ENCODE measurements at regions of chr21 and their contacts with region 1.

Region 1: GRCh38 chr21:34745557-34746255 is 76.9 kb downstream of the CLIC6 start:
- DNase-seq: peak; percentile 63 to 82 (median 71)
- ATAC-seq: peak; percentile 81 to 93 (median 90)
- H3K4me3 ChIP-seq: peak overlapping the region in 9 of 12 donors; percentile 0 to 55 (median 40)
- H3K27ac ChIP-seq: peak overlapping the region in 2 of 12 donors; percentile 43 to 46
- H3K4me1 ChIP-seq: peaks cover 0 to 14% (median 2%) of the 10 kb centered on the region in 12 donors
- H3K27me3 ChIP-seq: peaks cover 0 to 13% (median 0%) of the 10 kb centered on the region in 9 donors
- CTCF ChIP-seq: peak; percentile 62 to 90 (median 83)
- POLR2A ChIP-seq: no peak

Region 2: DNA sequence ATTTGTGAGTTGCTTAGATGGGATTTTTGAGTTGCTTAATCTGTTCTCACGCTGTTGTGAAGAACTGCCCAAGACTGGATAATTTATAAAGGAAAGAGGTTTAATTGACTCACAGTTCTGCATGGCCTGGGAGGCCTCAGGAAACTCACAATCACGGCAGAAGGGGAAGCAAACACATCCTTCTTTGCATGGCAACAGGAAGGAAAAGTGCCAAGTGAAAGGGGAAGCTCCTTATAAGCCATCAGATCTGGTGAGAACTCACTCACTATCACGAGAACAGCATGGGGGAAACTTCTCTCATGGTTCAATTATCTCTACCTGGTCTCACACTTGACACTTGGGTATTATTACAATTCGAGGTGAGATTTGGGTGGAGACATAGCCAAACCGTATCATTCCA is 66.7 kb before region 1 on chr21:
- intact Hi-C with region 1: no loop called
- DNase-seq: no peak
- ATAC-seq: no peak
- H3K4me3 ChIP-seq: no peak overlapping the region
- H3K27ac ChIP-seq: no peak overlapping the region
- H3K4me1 ChIP-seq: no peaks in the 10 kb centered on the region
- H3K27me3 ChIP-seq: peaks cover 0 to 24% (median 7%) of the 10 kb centered on the region in 9 donors
- CTCF ChIP-seq: no peak
- POLR2A ChIP-seq: no peak

Region 3: DNA sequence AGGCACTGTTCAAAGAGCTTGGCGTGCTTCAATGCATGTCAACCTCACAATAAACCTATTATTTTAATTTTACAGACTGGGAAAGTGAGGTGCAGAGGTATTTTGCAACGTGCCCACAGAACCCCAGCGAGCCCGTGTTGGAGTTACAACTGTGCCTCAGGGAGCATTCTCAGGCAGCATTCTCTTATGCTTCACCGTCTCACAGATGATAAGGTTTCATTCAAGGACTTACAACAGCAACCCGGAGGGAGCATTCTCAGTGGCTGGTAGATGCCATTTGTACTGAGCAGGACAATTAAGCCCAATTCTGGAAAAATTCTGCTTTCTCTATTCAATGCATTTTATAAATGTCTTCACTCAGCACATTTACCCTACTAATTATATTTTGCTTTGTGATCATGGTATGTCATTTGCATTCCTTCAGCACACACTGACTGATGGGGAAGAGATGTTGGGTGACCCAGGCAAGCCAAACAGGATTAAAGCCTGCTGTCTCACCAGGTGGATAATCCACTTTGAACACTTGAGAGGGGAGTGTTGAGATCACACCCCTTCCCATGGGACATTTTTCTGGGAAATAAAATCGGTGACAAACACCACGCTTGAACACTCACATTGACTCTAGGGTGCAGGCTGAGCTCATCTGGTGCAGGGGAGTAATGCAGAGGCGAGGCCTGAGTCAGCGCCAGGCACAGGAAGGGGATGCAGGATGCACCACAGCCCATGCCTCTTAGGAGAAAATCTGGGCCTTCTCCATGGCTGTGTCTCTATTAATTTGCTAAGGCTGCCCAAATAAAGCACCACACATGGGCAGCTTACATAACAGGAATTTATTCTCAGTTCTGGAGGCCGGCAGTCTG is 37.0 kb after region 1 on chr21:
- intact Hi-C with region 1: no loop called
- DNase-seq: no peak
- ATAC-seq: no peak
- H3K4me3 ChIP-seq: no peak overlapping the region
- H3K27ac ChIP-seq: no peak overlapping the region
- H3K4me1 ChIP-seq: no peaks in the 10 kb centered on the region
- H3K27me3 ChIP-seq: peaks cover 0 to 8% (median 0%) of the 10 kb centered on the region in 9 donors
- CTCF ChIP-seq: no peak
- POLR2A ChIP-seq: no peak

Region 4: DNA sequence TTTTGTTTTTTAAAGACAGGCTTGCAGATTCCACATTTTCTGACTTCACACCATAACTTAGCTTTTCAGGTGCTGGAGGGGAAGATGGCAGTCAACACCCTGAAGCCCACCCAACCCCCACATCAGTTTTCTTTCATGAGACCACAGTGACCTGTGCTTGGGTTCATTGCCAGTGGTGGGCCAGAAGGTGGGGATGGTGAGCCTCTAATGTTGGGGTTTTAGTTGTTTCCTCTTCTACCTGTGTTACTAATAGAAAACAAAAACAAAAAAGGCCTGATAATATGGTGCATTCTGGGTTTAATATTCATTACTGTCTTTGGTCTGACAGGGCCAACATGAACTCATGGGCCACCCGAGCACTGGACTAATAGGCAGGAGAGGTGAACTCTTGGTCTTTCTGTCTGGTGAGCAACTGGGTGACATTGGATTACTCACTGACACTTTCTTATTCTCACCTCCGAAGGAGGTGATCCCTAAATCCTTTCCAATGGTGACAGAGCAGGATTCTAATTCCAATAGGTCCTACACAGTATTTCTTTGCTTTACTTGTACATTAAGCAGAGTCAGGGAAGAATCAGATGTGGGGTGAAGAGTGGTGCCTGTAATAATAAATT is 55.9 kb after region 1 on chr21:
- intact Hi-C with region 1: no loop called
- DNase-seq: no peak
- ATAC-seq: no peak
- H3K4me3 ChIP-seq: no peak overlapping the region
- H3K27ac ChIP-seq: no peak overlapping the region
- H3K4me1 ChIP-seq: peaks cover 0 to 47% (median 0%) of the 10 kb centered on the region in 12 donors
- H3K27me3 ChIP-seq: no peaks in the 10 kb centered on the region
- CTCF ChIP-seq: peak in 5 of 12 donors; percentile 14 to 24 (median 21)
- POLR2A ChIP-seq: no peak

Region 5: GRCh38 chr21:35051287-35051818 is 305.6 kb after region 1 on chr21:
- intact Hi-C with region 1: loop called in 1 of 10 experiments (anchors 10 kb)
- DNase-seq: peak; percentile 82 to 91 (median 86)
- ATAC-seq: peak; percentile 86 to 94 (median 91)
- H3K4me3 ChIP-seq: no peak overlapping the region
- H3K27ac ChIP-seq: peak overlapping the region in 7 of 12 donors; percentile 13 to 76 (median 37)
- H3K4me1 ChIP-seq: peaks cover 0 to 47% (median 12%) of the 10 kb centered on the region in 12 donors
- H3K27me3 ChIP-seq: peaks cover 0 to under 1% (median 0%) of the 10 kb centered on the region in 9 donors
- CTCF ChIP-seq: peak in 11 of 12 donors; percentile 43 to 71 (median 60)
- POLR2A ChIP-seq: no peak

Region 6: GRCh38 chr21:35400233-35400957 is 654.7 kb after region 1 on chr21:
- intact Hi-C with region 1: loop called in 9 of 10 experiments (anchors 1 to 10 kb)
- DNase-seq: peak in 1 of 5 donors; percentile 22
- ATAC-seq: peak in 3 of 4 donors; percentile 63 to 73 (median 67)
- H3K4me3 ChIP-seq: peak overlapping the region in 1 of 12 donors; percentile 19
- H3K27ac ChIP-seq: peak overlapping the region in 2 of 12 donors; percentile 8 to 42
- H3K4me1 ChIP-seq: peaks cover 0 to 27% (median 0%) of the 10 kb centered on the region in 12 donors
- H3K27me3 ChIP-seq: peaks cover 0 to 20% (median 0%) of the 10 kb centered on the region in 9 donors
- CTCF ChIP-seq: peak in 11 of 12 donors; percentile 18 to 59 (median 48)
- POLR2A ChIP-seq: no peak

Region 7: GRCh38 chr21:35616090-35616489 is 870.4 kb after region 1 on chr21:
- intact Hi-C with region 1: loop called in 1 of 10 experiments (anchors 10 kb)
- DNase-seq: no peak
- ATAC-seq: peak in 1 of 4 donors; percentile 20
- H3K4me3 ChIP-seq: no peak overlapping the region
- H3K27ac ChIP-seq: peak overlapping the region in 1 of 12 donors; percentile 28
- H3K4me1 ChIP-seq: peaks cover 0 to 17% (median 0%) of the 10 kb centered on the region in 12 donors
- H3K27me3 ChIP-seq: peaks cover 0 to 5% (median 0%) of the 10 kb centered on the region in 9 donors
- CTCF ChIP-seq: peak in 10 of 12 donors; percentile 11 to 61 (median 38)
- POLR2A ChIP-seq: no peak

Region 8: GRCh38 chr21:35940074-35940927 is 1194.6 kb after region 1 on chr21:
- intact Hi-C with region 1: loop called in 9 of 10 experiments (anchors 1 to 10 kb)
- DNase-seq: peak in 4 of 5 donors; percentile 29 to 48 (median 43)
- ATAC-seq: peak; percentile 82 to 99 (median 96)
- H3K4me3 ChIP-seq: peak overlapping the region in 1 of 12 donors; percentile 22
- H3K27ac ChIP-seq: peak overlapping the region in 1 of 12 donors; percentile 5
- H3K4me1 ChIP-seq: peaks cover 0 to 12% (median 1%) of the 10 kb centered on the region in 12 donors
- H3K27me3 ChIP-seq: no peaks in the 10 kb centered on the region
- CTCF ChIP-seq: peak; percentile 50 to 78 (median 64)
- POLR2A ChIP-seq: no peak

Measured in heart left ventricle (tissue), 16 donors.